GM12878 (cell line): ENCODE measurements at regions of chr10 and their contacts with region 1.

Region 1: GRCh38 chr10:88932539-88933256 is 19.9 kb downstream of the ACTA2 start:
- DNase-seq: no peak
- ATAC-seq: peak; percentile 80
- H3K4me3 ChIP-seq: no peak overlapping the region
- H3K27ac ChIP-seq: peak overlapping the region; percentile 56; the same call in 1 of the 2 replicates
- H3K4me1 ChIP-seq: peaks cover 21% of the 10 kb centered on the region
- H3K27me3 ChIP-seq: no peaks in the 10 kb centered on the region
- CTCF ChIP-seq: peak; percentile 85 to 98 (median 95); a peak in 5 of 6 replicates
- EP300 ChIP-seq: no peak
- POLR2A ChIP-seq: no peak
- RAD21 ChIP-seq: peak; percentile 81

Region 2: GRCh38 chr10:88687853-88688467 is 244.7 kb before region 1 on chr10:
- CTCF ChIA-PET with region 1: interaction called, 7 read pairs
- POLR2A ChIA-PET with region 1: no interaction called
- RAD21 ChIA-PET with region 1: interaction called, 4 read pairs
- SMC1A ChIA-PET with region 1: interaction called, 4 read pairs
- in situ Hi-C with region 1: no loop called
- intact Hi-C with region 1: loop called (anchors 2 kb)
- DNase-seq: no peak
- ATAC-seq: peak; percentile 53
- H3K4me3 ChIP-seq: no peak overlapping the region
- H3K27ac ChIP-seq: no peak overlapping the region
- H3K4me1 ChIP-seq: no peaks in the 10 kb centered on the region
- H3K27me3 ChIP-seq: no peaks in the 10 kb centered on the region
- CTCF ChIP-seq: peak; percentile 69 to 70 (median 70)
- EP300 ChIP-seq: no peak
- POLR2A ChIP-seq: no peak
- RAD21 ChIP-seq: peak; percentile 84

Region 3: GRCh38 chr10:88781206-88781605 is 151.5 kb before region 1 on chr10:
- CTCF ChIA-PET with region 1: no interaction called
- POLR2A ChIA-PET with region 1: no interaction called
- RAD21 ChIA-PET with region 1: no interaction called
- SMC1A ChIA-PET with region 1: no interaction called
- in situ Hi-C with region 1: no loop called
- intact Hi-C with region 1: no loop called
- DNase-seq: no peak
- ATAC-seq: no peak
- H3K4me3 ChIP-seq: no peak overlapping the region
- H3K27ac ChIP-seq: no peak overlapping the region
- H3K4me1 ChIP-seq: no peaks in the 10 kb centered on the region
- H3K27me3 ChIP-seq: no peaks in the 10 kb centered on the region; a peak in 1 of 4 replicates
- CTCF ChIP-seq: no peak
- EP300 ChIP-seq: no peak
- POLR2A ChIP-seq: no peak
- RAD21 ChIP-seq: no peak

Region 4: GRCh38 chr10:88828310-88828709 is 104.4 kb before region 1 on chr10:
- CTCF ChIA-PET with region 1: interaction called, 895 read pairs
- POLR2A ChIA-PET with region 1: interaction called, 64 read pairs
- RAD21 ChIA-PET with region 1: interaction called, 390 read pairs
- SMC1A ChIA-PET with region 1: interaction called, 575 read pairs
- in situ Hi-C with region 1: no loop called
- intact Hi-C with region 1: no loop called
- DNase-seq: no peak
- ATAC-seq: no peak
- H3K4me3 ChIP-seq: no peak overlapping the region
- H3K27ac ChIP-seq: no peak overlapping the region
- H3K4me1 ChIP-seq: 0 out of 2 replicates have a peak, but pooled peaks cover 3% of the 10 kb centered on the region
- H3K27me3 ChIP-seq: no peaks in the 10 kb centered on the region
- CTCF ChIP-seq: no peak
- EP300 ChIP-seq: no peak
- POLR2A ChIP-seq: no peak
- RAD21 ChIP-seq: no peak

Region 5: DNA sequence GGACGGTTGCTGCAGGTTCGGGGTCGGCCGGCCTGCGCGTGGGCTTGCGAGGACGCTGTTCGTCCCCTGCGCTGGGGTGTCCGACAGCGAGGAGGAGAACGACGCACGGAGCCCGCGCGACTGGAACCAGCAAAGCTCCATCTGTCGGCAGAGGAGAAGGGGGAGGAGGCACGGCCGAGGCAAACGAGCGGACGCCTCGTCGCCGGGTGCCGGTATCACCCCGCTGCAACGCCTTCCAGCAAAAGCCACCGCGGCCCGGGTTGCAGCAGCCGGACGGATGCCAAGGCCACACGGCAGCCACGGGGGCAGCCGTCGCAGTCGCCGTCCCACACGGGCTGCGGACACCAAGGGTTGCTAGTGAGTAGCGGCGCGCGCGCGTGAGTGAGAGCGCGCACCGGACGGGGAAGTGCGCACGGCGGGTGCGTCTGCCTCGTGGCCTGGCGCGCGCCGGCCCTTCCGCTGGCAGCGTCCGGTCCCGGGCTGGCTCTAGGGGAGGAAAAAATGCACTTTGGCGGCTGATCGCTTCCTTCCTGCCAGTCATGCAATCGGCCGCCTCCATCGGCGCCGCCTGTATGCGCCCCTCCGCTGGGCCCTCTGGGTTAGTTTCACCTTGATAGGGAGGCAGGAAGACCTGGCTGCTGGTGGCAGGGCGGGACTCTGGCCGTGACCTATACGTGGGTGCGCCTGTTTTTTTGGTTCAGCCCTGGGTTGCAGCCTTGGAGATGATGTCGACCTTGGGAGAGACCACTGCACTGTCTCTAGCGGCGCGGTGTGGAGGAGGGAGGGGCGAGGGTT is 52.2 kb before region 1 on chr10:
- CTCF ChIA-PET with region 1: interaction called, 64 read pairs
- POLR2A ChIA-PET with region 1: interaction called, 7 read pairs
- RAD21 ChIA-PET with region 1: interaction called, 54 read pairs
- SMC1A ChIA-PET with region 1: interaction called, 110 read pairs
- in situ Hi-C with region 1: no loop called
- intact Hi-C with region 1: loop called (anchors 2 kb)
- DNase-seq: peak; percentile 70
- ATAC-seq: peak; percentile 84
- H3K4me3 ChIP-seq: peak overlapping the region; percentile 89
- H3K27ac ChIP-seq: peak overlapping the region; percentile 82
- H3K4me1 ChIP-seq: peaks cover 20% of the 10 kb centered on the region
- H3K27me3 ChIP-seq: no peaks in the 10 kb centered on the region
- CTCF ChIP-seq: peak in 2 of 3 experiments; percentile 22 to 23; a peak in 3 of 6 replicates
- EP300 ChIP-seq: 0 out of 4 replicates have a peak, but pooled peaks of 1 of the 2 experiments have one; percentile 36
- POLR2A ChIP-seq: peak; percentile 96
- RAD21 ChIP-seq: 0 out of 2 replicates have a peak, but pooled peaks have one; percentile 5

Region 6: GRCh38 chr10:88908194-88908593 is 24.5 kb before region 1 on chr10:
- CTCF ChIA-PET with region 1: interaction called, 71 read pairs
- POLR2A ChIA-PET with region 1: no interaction called
- RAD21 ChIA-PET with region 1: interaction called, 18 read pairs
- SMC1A ChIA-PET with region 1: interaction called, 80 read pairs
- in situ Hi-C with region 1: no loop called
- intact Hi-C with region 1: no loop called
- DNase-seq: no peak
- ATAC-seq: peak; percentile 48; the same call in 2 of the 3 replicates
- H3K4me3 ChIP-seq: no peak overlapping the region
- H3K27ac ChIP-seq: no peak overlapping the region
- H3K4me1 ChIP-seq: no peaks in the 10 kb centered on the region
- H3K27me3 ChIP-seq: no peaks in the 10 kb centered on the region
- CTCF ChIP-seq: no peak
- EP300 ChIP-seq: no peak
- POLR2A ChIP-seq: no peak
- RAD21 ChIP-seq: no peak

Region 7: GRCh38 chr10:88990384-88991160 is 57.9 kb after region 1 on chr10 and contains the start of gene FAS:
- CTCF ChIA-PET with region 1: interaction called, 250 read pairs
- POLR2A ChIA-PET with region 1: interaction called, 7 read pairs
- RAD21 ChIA-PET with region 1: interaction called, 39 read pairs
- SMC1A ChIA-PET with region 1: interaction called, 114 read pairs
- in situ Hi-C with region 1: no loop called
- intact Hi-C with region 1: loop called (anchors 1 kb)
- DNase-seq: peak; percentile 80
- ATAC-seq: peak; percentile 75
- H3K4me3 ChIP-seq: peak within 1 kb of the TSS; percentile 83
- H3K27ac ChIP-seq: peak within 1 kb of the TSS; percentile 98
- H3K4me1 ChIP-seq: peaks cover 13% of the 10 kb centered on the region
- H3K27me3 ChIP-seq: no peaks in the 10 kb centered on the region
- CTCF ChIP-seq: no peak
- EP300 ChIP-seq: peak in 1 of 2 experiments; percentile 32; a peak in 1 of 4 replicates
- POLR2A ChIP-seq: peak; percentile 86
- RAD21 ChIP-seq: no peak
- polyA plus RNA-seq, gene FAS: 50.1 to 54.9 TPM

Region 8: GRCh38 chr10:89029785-89030437 is 97.2 kb after region 1 on chr10:
- CTCF ChIA-PET with region 1: interaction called, 52 read pairs
- POLR2A ChIA-PET with region 1: no interaction called
- RAD21 ChIA-PET with region 1: interaction called, 17 read pairs
- SMC1A ChIA-PET with region 1: interaction called, 39 read pairs
- in situ Hi-C with region 1: loop called (anchors 5 kb)
- intact Hi-C with region 1: loop called (anchors 1 kb)
- DNase-seq: peak; percentile 24
- ATAC-seq: peak; percentile 70
- H3K4me3 ChIP-seq: no peak overlapping the region
- H3K27ac ChIP-seq: no peak overlapping the region
- H3K4me1 ChIP-seq: peaks cover 26% of the 10 kb centered on the region
- H3K27me3 ChIP-seq: no peaks in the 10 kb centered on the region
- CTCF ChIP-seq: peak; percentile 76 to 90 (median 82)
- EP300 ChIP-seq: no peak
- POLR2A ChIP-seq: no peak
- RAD21 ChIP-seq: peak; percentile 86

Region 9: GRCh38 chr10:89659143-89660131 is 726.7 kb after region 1 on chr10:
- CTCF ChIA-PET with region 1: no interaction called
- POLR2A ChIA-PET with region 1: no interaction called
- RAD21 ChIA-PET with region 1: no interaction called
- SMC1A ChIA-PET with region 1: no interaction called
- in situ Hi-C with region 1: no loop called
- intact Hi-C with region 1: no loop called
- DNase-seq: peak; percentile 32
- ATAC-seq: peak; percentile 83
- H3K4me3 ChIP-seq: no peak overlapping the region
- H3K27ac ChIP-seq: no peak overlapping the region; the same call in 1 of the 2 replicates
- H3K4me1 ChIP-seq: peaks cover 7% of the 10 kb centered on the region
- H3K27me3 ChIP-seq: no peaks in the 10 kb centered on the region
- CTCF ChIP-seq: no peak
- EP300 ChIP-seq: no peak
- POLR2A ChIP-seq: no peak
- RAD21 ChIP-seq: no peak